Activated naive CD4-positive, alpha-beta T cell treated with anti-CD3 and anti-CD28 coated beads for 36 hours (primary cell): ENCODE measurements at regions of chr19 and their contacts with region 1.

Region 1: GRCh38 chr19:49877020-49877878 is at the starts of genes AKT1S1 and TBC1D17:
- DNase-seq: peak; percentile 99
- H3K4me3 Mint-ChIP-seq: no peak within 1 kb of the TSS
- H3K27ac Mint-ChIP-seq: no peak within 1 kb of the TSS
- H3K4me1 Mint-ChIP-seq: peaks cover 28% of the 10 kb centered on the region
- H3K27me3 Mint-ChIP-seq: no peaks in the 10 kb centered on the region
- total RNA-seq, gene AKT1S1: 13.3 to 14.2 TPM
- total RNA-seq, gene TBC1D17: 29.8 to 32.4 TPM

Region 2: DNA sequence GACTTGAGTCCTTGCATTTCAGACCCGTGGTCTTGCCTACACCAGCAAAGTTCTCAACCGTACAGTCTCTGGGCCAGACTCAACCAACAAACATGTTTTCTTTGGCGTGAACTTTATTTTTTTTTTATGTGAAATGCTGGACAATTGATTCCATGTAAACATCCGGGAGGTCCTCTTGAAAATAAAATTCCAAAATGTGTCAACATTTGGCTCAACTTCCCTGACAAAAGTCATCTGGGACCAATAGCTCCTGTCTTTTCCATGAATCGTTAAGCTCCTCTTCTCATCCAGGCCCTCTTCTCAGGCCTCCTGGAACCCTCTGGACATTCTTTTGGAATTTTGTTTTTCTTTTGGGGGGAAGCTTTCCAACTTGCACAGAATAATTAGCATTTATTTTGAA is 421.5 kb before region 1 on chr19:
- CTCF ChIA-PET with region 1: no interaction called
- intact Hi-C with region 1: no loop called
- DNase-seq: no peak
- H3K4me3 Mint-ChIP-seq: no peak overlapping the region
- H3K27ac Mint-ChIP-seq: peak overlapping the region; percentile 0
- H3K4me1 Mint-ChIP-seq: peaks cover 23% of the 10 kb centered on the region
- H3K27me3 Mint-ChIP-seq: no peaks in the 10 kb centered on the region

Region 3: GRCh38 chr19:49497047-49497788 is 380.0 kb before region 1 on chr19:
- CTCF ChIA-PET with region 1: no interaction called
- intact Hi-C with region 1: loop called (anchors 2 kb)
- DNase-seq: peak; percentile 79
- H3K4me3 Mint-ChIP-seq: peak overlapping the region; percentile 87
- H3K27ac Mint-ChIP-seq: peak overlapping the region; percentile 96
- H3K4me1 Mint-ChIP-seq: peaks cover 49% of the 10 kb centered on the region
- H3K27me3 Mint-ChIP-seq: no peaks in the 10 kb centered on the region

Region 4: GRCh38 chr19:49665351-49666119 is 211.7 kb before region 1 on chr19 and contains the starts of genes BCL2L12 and IRF3:
- CTCF ChIA-PET with region 1: no interaction called
- intact Hi-C with region 1: loop called (anchors 1 kb)
- DNase-seq: peak; percentile 100
- H3K4me3 Mint-ChIP-seq: peak within 1 kb of the TSS; percentile 98
- H3K27ac Mint-ChIP-seq: peak within 1 kb of the TSS; percentile 93
- H3K4me1 Mint-ChIP-seq: peaks cover 35% of the 10 kb centered on the region
- H3K27me3 Mint-ChIP-seq: no peaks in the 10 kb centered on the region
- total RNA-seq, gene BCL2L12: 70.5 to 75.6 TPM
- total RNA-seq, gene IRF3: 85.2 to 97.8 TPM

Region 5: GRCh38 chr19:49786376-49786820 is 90.9 kb before region 1 on chr19:
- CTCF ChIA-PET with region 1: no interaction called
- intact Hi-C with region 1: no loop called
- DNase-seq: no peak
- H3K4me3 Mint-ChIP-seq: no peak overlapping the region
- H3K27ac Mint-ChIP-seq: no peak overlapping the region
- H3K4me1 Mint-ChIP-seq: no peaks in the 10 kb centered on the region
- H3K27me3 Mint-ChIP-seq: no peaks in the 10 kb centered on the region

Region 6: GRCh38 chr19:49832556-49832955 is 44.7 kb before region 1 on chr19:
- CTCF ChIA-PET with region 1: no interaction called
- intact Hi-C with region 1: no loop called
- DNase-seq: no peak
- H3K4me3 Mint-ChIP-seq: no peak overlapping the region
- H3K27ac Mint-ChIP-seq: no peak overlapping the region
- H3K4me1 Mint-ChIP-seq: no peaks in the 10 kb centered on the region
- H3K27me3 Mint-ChIP-seq: no peaks in the 10 kb centered on the region

Region 7: GRCh38 chr19:49850473-49851342 is 26.5 kb before region 1 on chr19 and contains the start of gene PTOV1:
- CTCF ChIA-PET with region 1: no interaction called
- intact Hi-C with region 1: loop called (anchors 1 kb)
- DNase-seq: peak; percentile 91
- H3K4me3 Mint-ChIP-seq: peak within 1 kb of the TSS; percentile 87
- H3K27ac Mint-ChIP-seq: peak within 1 kb of the TSS; percentile 95
- H3K4me1 Mint-ChIP-seq: peaks cover 42% of the 10 kb centered on the region
- H3K27me3 Mint-ChIP-seq: no peaks in the 10 kb centered on the region
- total RNA-seq, gene PTOV1: 66.0 to 68.0 TPM

Region 8: DNA sequence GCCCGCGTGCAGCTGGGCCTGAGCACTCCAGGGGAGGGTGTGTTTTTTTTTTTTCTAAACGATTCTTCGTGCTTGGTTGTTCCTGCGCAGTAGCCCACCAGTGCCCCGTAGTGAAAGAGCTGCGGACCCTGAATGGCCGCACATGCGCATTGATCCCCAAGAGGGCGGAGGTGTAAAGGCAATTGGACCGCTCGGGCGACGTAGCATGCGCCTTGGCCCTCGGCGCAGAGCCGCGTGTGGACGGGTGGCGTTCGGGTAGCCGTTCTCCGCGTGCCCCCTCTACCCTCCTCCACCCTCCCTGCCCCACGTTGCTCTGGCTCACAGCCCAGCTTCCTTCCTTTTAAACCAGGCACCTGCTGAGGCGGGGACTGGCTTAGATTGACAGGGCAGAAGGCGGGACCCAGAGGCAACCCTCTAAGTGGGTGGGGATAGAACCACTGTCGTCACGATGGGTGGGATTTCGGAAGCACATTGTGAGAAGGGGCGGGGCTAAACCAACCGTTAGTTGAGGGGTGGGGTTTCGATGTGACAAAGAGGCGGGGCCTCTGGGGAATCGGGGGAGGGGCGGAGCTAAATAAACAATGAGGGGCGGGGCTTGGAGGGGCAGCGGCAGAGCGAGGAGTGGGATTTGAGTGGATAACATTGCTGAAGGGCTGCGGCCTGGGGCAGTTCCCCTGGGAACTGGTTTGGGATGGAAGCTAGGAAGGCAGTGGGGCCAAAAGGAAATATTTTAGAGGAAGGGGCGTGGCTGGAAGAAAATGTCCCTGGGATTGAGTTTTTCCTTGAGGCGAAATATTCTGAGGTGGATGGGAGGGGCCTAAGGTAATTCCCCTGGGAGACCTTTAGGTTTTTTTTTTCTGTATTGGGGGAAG is 52.6 kb after region 1 on chr19:
- CTCF ChIA-PET with region 1: no interaction called
- intact Hi-C with region 1: loop called (anchors 1 kb)
- DNase-seq: peak; percentile 97
- H3K4me3 Mint-ChIP-seq: peak overlapping the region; percentile 89
- H3K27ac Mint-ChIP-seq: peak overlapping the region; percentile 100
- H3K4me1 Mint-ChIP-seq: peaks cover 60% of the 10 kb centered on the region
- H3K27me3 Mint-ChIP-seq: no peaks in the 10 kb centered on the region